ENCODE measurements at regions of chrX and their contacts with region 1.

Region 1: DNA sequence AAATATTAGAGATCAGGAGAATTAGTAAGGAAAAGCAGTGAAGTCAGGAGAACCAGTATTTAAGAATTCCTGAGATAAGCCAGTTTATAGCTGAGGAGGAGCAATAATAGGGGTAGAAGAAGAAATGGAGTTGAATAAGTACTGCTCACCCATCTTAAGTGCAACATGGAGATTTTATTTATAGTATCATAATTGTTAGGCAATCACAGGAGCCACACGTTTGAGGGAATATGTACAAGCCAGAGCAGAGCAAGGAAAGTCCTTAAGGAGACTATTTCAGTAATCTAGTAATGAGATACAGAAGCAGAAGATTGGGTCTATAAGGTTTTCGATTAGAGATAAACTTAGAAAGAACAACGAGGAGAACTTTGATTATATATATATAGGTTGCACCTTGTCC is 145.0 kb downstream of the KDM6A start:
- DNase-seq: no peak
- ATAC-seq: no peak
- H3K4me3 ChIP-seq: no peak overlapping the region
- H3K27ac ChIP-seq: no peak overlapping the region
- H3K4me1 ChIP-seq: peaks cover 2% of the 10 kb centered on the region; the same call in 1 of the 2 replicates
- H3K27me3 ChIP-seq: no peaks in the 10 kb centered on the region
- CTCF ChIP-seq: no peak
- POLR2A ChIP-seq: no peak
- RAD21 ChIP-seq: no peak

Region 2: GRCh38 chrX:45046417-45046816 is 28.5 kb after region 1 on chrX:
- CTCF ChIA-PET with region 1: no interaction called
- POLR2A ChIA-PET with region 1: no interaction called
- dilution Hi-C with region 1: no loop called
- in situ Hi-C with region 1: no loop called
- intact Hi-C with region 1: loop called (anchors 1 kb)
- DNase-seq: no peak
- ATAC-seq: 0 out of 2 replicates have a peak, but pooled peaks have one; percentile 40
- H3K4me3 ChIP-seq: no peak overlapping the region
- H3K27ac ChIP-seq: no peak overlapping the region
- H3K4me1 ChIP-seq: no peaks in the 10 kb centered on the region
- H3K27me3 ChIP-seq: no peaks in the 10 kb centered on the region
- CTCF ChIP-seq: no peak
- POLR2A ChIP-seq: no peak
- RAD21 ChIP-seq: no peak

Region 3: DNA sequence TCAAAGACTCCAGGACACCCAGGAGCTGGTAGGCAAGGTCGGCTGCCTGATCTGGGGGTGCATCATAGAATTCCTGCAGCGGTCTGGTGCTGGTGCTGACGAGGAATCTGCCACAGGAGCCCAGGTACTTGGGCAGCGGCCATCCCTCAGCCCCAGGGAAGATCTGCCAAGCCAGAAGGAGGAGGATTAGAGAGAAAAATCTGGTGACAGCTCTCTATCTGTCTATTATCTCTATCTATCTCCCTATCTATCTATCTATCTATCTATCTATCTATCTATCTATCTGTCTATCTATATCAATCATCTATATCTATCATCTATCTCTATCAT is 136.1 kb after region 1 on chrX:
- CTCF ChIA-PET with region 1: no interaction called
- POLR2A ChIA-PET with region 1: no interaction called
- dilution Hi-C with region 1: no loop called
- in situ Hi-C with region 1: no loop called
- intact Hi-C with region 1: no loop called
- DNase-seq: no peak
- ATAC-seq: no peak
- H3K4me3 ChIP-seq: no peak overlapping the region
- H3K27ac ChIP-seq: no peak overlapping the region
- H3K4me1 ChIP-seq: no peaks in the 10 kb centered on the region
- H3K27me3 ChIP-seq: peaks cover 15% of the 10 kb centered on the region; the same call in 1 of the 2 replicates
- CTCF ChIP-seq: no peak
- POLR2A ChIP-seq: no peak
- RAD21 ChIP-seq: no peak